HCT116 (cell line): ENCODE measurements at regions of chr1 and their contacts with region 1.

Region 1: DNA sequence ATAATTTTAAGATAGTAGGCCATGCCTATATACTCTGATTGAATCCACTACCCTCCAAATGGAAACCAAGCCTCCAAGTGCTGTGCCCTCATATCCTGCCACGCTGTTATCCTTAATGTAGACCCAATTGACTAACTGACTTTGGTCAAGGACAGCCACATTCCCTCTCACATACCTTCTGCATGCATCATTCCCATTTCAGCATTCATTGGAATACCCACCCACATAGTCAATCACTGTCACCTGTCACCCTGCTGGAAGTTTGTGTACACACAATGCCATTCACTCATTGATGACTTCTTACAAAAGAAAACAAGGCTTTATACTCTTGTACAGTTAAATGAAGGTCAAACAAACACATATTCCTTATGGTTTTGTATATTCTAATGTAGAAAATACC is 221.1 kb upstream of the PBX1 start:
- DNase-seq: peak; percentile 4
- ATAC-seq: peak; percentile 50; the same call in 1 of the 2 replicates
- H3K4me3 ChIP-seq: no peak overlapping the region
- H3K27ac ChIP-seq: no peak overlapping the region
- H3K4me1 ChIP-seq: peaks cover 0 to 3% of the 10 kb centered on the region in 2 experiments; a peak in 1 of 4 replicates
- H3K27me3 ChIP-seq: no peaks in the 10 kb centered on the region
- CTCF ChIP-seq: no peak
- POLR2A ChIP-seq: no peak
- RAD21 ChIP-seq: no peak

Region 2: GRCh38 chr1:164320790-164321731 is 16.8 kb before region 1 on chr1:
- CTCF ChIA-PET with region 1: no interaction called
- POLR2A ChIA-PET with region 1: no interaction called
- RAD21 ChIA-PET with region 1: no interaction called
- intact Hi-C with region 1: no loop called
- DNase-seq: no peak
- ATAC-seq: no peak
- H3K4me3 ChIP-seq: no peak overlapping the region
- H3K27ac ChIP-seq: no peak overlapping the region
- H3K4me1 ChIP-seq: no peaks in the 10 kb centered on the region
- H3K27me3 ChIP-seq: no peaks in the 10 kb centered on the region
- CTCF ChIP-seq: no peak
- POLR2A ChIP-seq: no peak
- RAD21 ChIP-seq: no peak

Region 3: GRCh38 chr1:164347980-164348379 is 10.1 kb after region 1 on chr1:
- CTCF ChIA-PET with region 1: no interaction called
- POLR2A ChIA-PET with region 1: no interaction called
- RAD21 ChIA-PET with region 1: no interaction called
- intact Hi-C with region 1: loop called (anchors 1 kb)
- DNase-seq: no peak
- ATAC-seq: no peak
- H3K4me3 ChIP-seq: no peak overlapping the region
- H3K27ac ChIP-seq: no peak overlapping the region
- H3K4me1 ChIP-seq: no peaks in the 10 kb centered on the region
- H3K27me3 ChIP-seq: no peaks in the 10 kb centered on the region
- CTCF ChIP-seq: no peak
- POLR2A ChIP-seq: no peak
- RAD21 ChIP-seq: no peak

Region 4: GRCh38 chr1:164440232-164440631 is 102.3 kb after region 1 on chr1:
- CTCF ChIA-PET with region 1: no interaction called
- POLR2A ChIA-PET with region 1: no interaction called
- RAD21 ChIA-PET with region 1: no interaction called
- intact Hi-C with region 1: no loop called
- DNase-seq: no peak
- ATAC-seq: peak; percentile 98
- H3K4me3 ChIP-seq: no peak overlapping the region
- H3K27ac ChIP-seq: no peak overlapping the region
- H3K4me1 ChIP-seq: peaks cover 3 to 9% of the 10 kb centered on the region in 2 experiments; a peak in 3 of 4 replicates
- H3K27me3 ChIP-seq: no peaks in the 10 kb centered on the region
- CTCF ChIP-seq: peak in 2 of 3 experiments; percentile 60 to 65; a peak in 4 of 6 replicates
- POLR2A ChIP-seq: no peak
- RAD21 ChIP-seq: peak; percentile 58